PC-3 (cell line): ENCODE measurements at regions of chr2 and their contacts with region 1.

Region 1: GRCh38 chr2:218568190-218569037 is at the starts of genes CNOT9 and USP37:
- DNase-seq: peak; percentile 98
- ATAC-seq: peak; percentile 88
- H3K4me3 ChIP-seq: peak within 1 kb of the TSS; percentile 84
- H3K27ac ChIP-seq: peak within 1 kb of the TSS; percentile 85
- H3K4me1 ChIP-seq: peaks cover 25% of the 10 kb centered on the region
- H3K27me3 ChIP-seq: no peaks in the 10 kb centered on the region
- CTCF ChIP-seq: no peak
- total RNA-seq, gene CNOT9: 78.0 and 86.8 TPM in 2 replicates
- total RNA-seq, gene USP37: 10.7 and 11.6 TPM in 2 replicates

Region 2: GRCh38 chr2:218547978-218548377 is 20.4 kb before region 1 on chr2:
- CTCF ChIA-PET with region 1: no interaction called
- POLR2A ChIA-PET with region 1: no interaction called
- intact Hi-C with region 1: no loop called
- DNase-seq: no peak
- ATAC-seq: no peak
- H3K4me3 ChIP-seq: no peak overlapping the region
- H3K27ac ChIP-seq: no peak overlapping the region
- H3K4me1 ChIP-seq: no peaks in the 10 kb centered on the region
- H3K27me3 ChIP-seq: no peaks in the 10 kb centered on the region
- CTCF ChIP-seq: no peak

Region 3: DNA sequence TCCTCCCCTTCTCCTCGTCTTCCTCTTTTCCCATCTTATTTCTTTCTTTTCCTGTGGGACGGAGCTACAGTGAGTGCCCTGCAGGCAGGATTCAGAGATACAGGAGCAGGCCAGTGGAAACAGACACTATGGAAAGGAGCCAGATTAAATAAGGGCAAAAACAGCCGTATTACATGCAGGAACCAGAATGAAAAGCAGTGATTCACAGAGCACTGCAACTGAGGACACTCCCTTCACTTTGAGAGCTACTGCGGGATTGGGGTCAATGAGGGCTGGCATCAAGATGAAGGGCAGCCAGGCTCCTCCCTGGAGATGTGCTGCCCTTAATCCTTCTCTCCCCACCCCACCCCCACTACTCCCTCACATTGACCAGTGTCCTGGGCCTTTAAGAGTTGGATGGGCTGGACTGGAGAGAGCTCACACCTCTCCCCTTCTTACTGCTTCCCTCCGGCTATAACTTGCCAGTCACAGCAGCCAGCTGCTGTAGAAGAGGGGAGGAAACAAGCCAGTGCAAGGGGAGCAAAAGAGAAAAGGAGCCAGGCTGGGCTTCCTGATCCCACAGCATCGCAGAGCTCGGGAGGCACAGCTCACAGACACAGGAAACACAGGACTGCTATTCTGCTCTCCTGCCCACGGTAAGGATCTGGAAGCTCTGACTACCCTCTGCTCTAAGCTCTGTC is 39.2 kb after region 1 on chr2 and contains the start of gene PLCD4:
- CTCF ChIA-PET with region 1: no interaction called
- POLR2A ChIA-PET with region 1: no interaction called
- intact Hi-C with region 1: loop called (anchors 5 kb)
- DNase-seq: peak; percentile 65
- ATAC-seq: peak; percentile 82
- H3K4me3 ChIP-seq: peak within 1 kb of the TSS; percentile 4; the same call in 1 of the 2 replicates
- H3K27ac ChIP-seq: 0 out of 2 replicates have a peak within 1 kb of the TSS, but pooled peaks have one; percentile 5
- H3K4me1 ChIP-seq: peaks cover 24% of the 10 kb centered on the region
- H3K27me3 ChIP-seq: no peaks in the 10 kb centered on the region
- CTCF ChIP-seq: no peak
- total RNA-seq, gene PLCD4: 5.6 and 11.7 TPM in 2 replicates

Region 4: GRCh38 chr2:218745559-218746469 is 177.4 kb after region 1 on chr2:
- CTCF ChIA-PET with region 1: no interaction called
- POLR2A ChIA-PET with region 1: no interaction called
- intact Hi-C with region 1: no loop called
- DNase-seq: peak; percentile 22
- ATAC-seq: peak; percentile 82
- H3K4me3 ChIP-seq: no peak overlapping the region
- H3K27ac ChIP-seq: 0 out of 2 replicates have a peak overlapping the region, but pooled peaks have one; percentile 8
- H3K4me1 ChIP-seq: no peaks in the 10 kb centered on the region
- H3K27me3 ChIP-seq: no peaks in the 10 kb centered on the region
- CTCF ChIP-seq: no peak